ENCODE measurements at regions of chr13 and their contacts with region 1.

Region 1: GRCh38 chr13:95296326-95296925 is 4.8 kb downstream of the ABCC4 start:
- DNase-seq: peak; percentile 58 to 71
- H3K4me3 ChIP-seq: no peak overlapping the region
- H3K27ac ChIP-seq: no peak overlapping the region
- H3K4me1 ChIP-seq: peaks cover 3 to 5% of the 10 kb centered on the region in 2 donors
- H3K27me3 ChIP-seq: no peaks in the 10 kb centered on the region
- CTCF ChIP-seq: peak; percentile 13 to 77 (median 54)
- POLR2A ChIP-seq: no peak

Region 2: DNA sequence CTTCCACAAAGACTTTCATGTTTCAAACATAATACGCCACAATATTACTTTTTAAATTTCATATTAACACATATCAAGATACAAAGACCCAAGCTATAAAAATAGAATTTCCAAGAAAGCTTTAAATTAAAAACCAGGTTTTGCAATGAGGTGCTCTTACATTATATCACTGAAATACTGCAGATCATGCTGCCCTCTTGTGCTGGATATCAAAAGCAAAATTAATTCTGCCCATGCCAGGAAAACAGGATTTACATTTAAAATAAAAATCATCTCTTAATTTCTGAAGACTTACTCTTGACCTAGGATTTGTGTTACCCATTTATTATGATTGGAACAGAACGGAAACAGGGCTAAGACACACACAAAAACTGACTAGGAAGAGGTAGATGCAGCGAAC is 140.2 kb before region 1 on chr13:
- intact Hi-C with region 1: no loop called
- DNase-seq: no peak
- H3K4me3 ChIP-seq: no peak overlapping the region
- H3K27ac ChIP-seq: no peak overlapping the region
- H3K4me1 ChIP-seq: no peaks in the 10 kb centered on the region
- H3K27me3 ChIP-seq: no peaks in the 10 kb centered on the region
- CTCF ChIP-seq: no peak
- POLR2A ChIP-seq: no peak

Region 3: GRCh38 chr13:95191821-95192563 is 104.4 kb before region 1 on chr13:
- intact Hi-C with region 1: loop called (anchors 10 kb)
- DNase-seq: peak; percentile 72 to 83
- H3K4me3 ChIP-seq: no peak overlapping the region
- H3K27ac ChIP-seq: peak overlapping the region; percentile 58 to 81 (median 80)
- H3K4me1 ChIP-seq: peaks cover 19 to 37% of the 10 kb centered on the region in 2 donors
- H3K27me3 ChIP-seq: no peaks in the 10 kb centered on the region
- CTCF ChIP-seq: peak; percentile 25 to 81 (median 72)
- POLR2A ChIP-seq: no peak

Region 4: GRCh38 chr13:95387733-95388207 is 91.3 kb after region 1 on chr13:
- intact Hi-C with region 1: loop called (anchors 10 kb)
- DNase-seq: peak; percentile 17 to 45
- H3K4me3 ChIP-seq: no peak overlapping the region
- H3K27ac ChIP-seq: no peak overlapping the region
- H3K4me1 ChIP-seq: peaks cover 0 to 6% of the 10 kb centered on the region in 2 donors
- H3K27me3 ChIP-seq: no peaks in the 10 kb centered on the region
- CTCF ChIP-seq: no peak
- POLR2A ChIP-seq: no peak

Measured in thyroid gland (tissue), 4 donors.